ENCODE measurements at regions of chr7 and their contacts with region 1.

Region 1: GRCh38 chr7:130941322-130942210 is 207.6 kb upstream of the KLF14 start:
- DNase-seq: no peak
- ATAC-seq: peak; percentile 18
- H3K4me3 Mint-ChIP-seq: peak overlapping the region; percentile 72
- H3K27ac Mint-ChIP-seq: peak overlapping the region; percentile 75
- H3K4me1 Mint-ChIP-seq: peaks cover 83% of the 10 kb centered on the region
- H3K27me3 Mint-ChIP-seq: no peaks in the 10 kb centered on the region

Region 2: GRCh38 chr7:130912862-130913631 is 28.5 kb before region 1 on chr7:
- CTCF ChIA-PET with region 1: interaction called, 36 read pairs
- POLR2A ChIA-PET with region 1: interaction called, 16 read pairs
- DNase-seq: peak; percentile 89
- ATAC-seq: peak; percentile 92
- H3K4me3 Mint-ChIP-seq: peak overlapping the region; percentile 91
- H3K27ac Mint-ChIP-seq: peak overlapping the region; percentile 99
- H3K4me1 Mint-ChIP-seq: peaks cover 89% of the 10 kb centered on the region
- H3K27me3 Mint-ChIP-seq: no peaks in the 10 kb centered on the region

Region 3: GRCh38 chr7:130929896-130930659 is 11.5 kb before region 1 on chr7:
- CTCF ChIA-PET with region 1: interaction called, 11 read pairs
- POLR2A ChIA-PET with region 1: interaction called, 3 read pairs
- DNase-seq: no peak
- ATAC-seq: no peak
- H3K4me3 Mint-ChIP-seq: no peak overlapping the region
- H3K27ac Mint-ChIP-seq: peak overlapping the region; percentile 40
- H3K4me1 Mint-ChIP-seq: peaks cover 61% of the 10 kb centered on the region
- H3K27me3 Mint-ChIP-seq: no peaks in the 10 kb centered on the region

Region 4: GRCh38 chr7:131254211-131254610 is 312.6 kb after region 1 on chr7:
- CTCF ChIA-PET with region 1: no interaction called
- POLR2A ChIA-PET with region 1: no interaction called
- DNase-seq: no peak
- ATAC-seq: no peak
- H3K4me3 Mint-ChIP-seq: no peak overlapping the region
- H3K27ac Mint-ChIP-seq: no peak overlapping the region
- H3K4me1 Mint-ChIP-seq: no peaks in the 10 kb centered on the region
- H3K27me3 Mint-ChIP-seq: peaks cover 12% of the 10 kb centered on the region

Measured in activated CD8-positive, alpha-beta T cell treated with anti-CD3 and anti-CD28 coated beads, Interleukin-2, amount 10 ng/mL, durations not matched to agents 7 days and 5 days (primary cell).